MCF 10A (cell line): ENCODE measurements at regions of chr10 and their contacts with region 1.

Region 1: DNA sequence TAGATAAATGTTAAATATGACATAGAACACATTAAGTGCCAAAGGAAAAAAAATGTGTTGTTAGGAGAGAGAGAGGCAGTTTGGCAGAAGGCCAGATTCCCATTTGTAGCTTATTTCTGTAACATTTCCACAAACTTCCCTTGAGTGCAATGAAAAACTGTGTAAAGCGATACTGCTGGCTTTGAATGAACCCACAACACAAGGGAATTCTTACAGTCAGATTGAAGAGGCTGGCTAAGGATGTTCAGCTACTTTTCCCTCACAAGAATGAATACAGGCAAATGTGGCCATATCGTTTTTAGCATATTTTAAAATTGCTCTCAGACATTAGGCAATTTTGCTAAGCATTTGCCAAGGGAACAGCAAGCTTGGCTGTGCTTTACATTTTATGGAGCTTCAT is 614.1 kb upstream of the FZD8 start:
- DNase-seq: peak; percentile 27
- H3K4me3 Mint-ChIP-seq: peak overlapping the region; percentile 44
- H3K27ac Mint-ChIP-seq: peak overlapping the region; percentile 91
- H3K4me1 Mint-ChIP-seq: peaks cover 41% of the 10 kb centered on the region
- H3K27me3 Mint-ChIP-seq: no peaks in the 10 kb centered on the region
- CTCF ChIP-seq: no peak

Region 2: GRCh38 chr10:36271627-36272340 is 15.6 kb after region 1 on chr10:
- CTCF ChIA-PET with region 1: no interaction called
- POLR2A ChIA-PET with region 1: interaction called, 31 read pairs
- intact Hi-C with region 1: no loop called
- DNase-seq: peak; percentile 65
- H3K4me3 Mint-ChIP-seq: peak overlapping the region; percentile 32
- H3K27ac Mint-ChIP-seq: peak overlapping the region; percentile 98
- H3K4me1 Mint-ChIP-seq: peaks cover 26% of the 10 kb centered on the region
- H3K27me3 Mint-ChIP-seq: no peaks in the 10 kb centered on the region
- CTCF ChIP-seq: no peak

Region 3: DNA sequence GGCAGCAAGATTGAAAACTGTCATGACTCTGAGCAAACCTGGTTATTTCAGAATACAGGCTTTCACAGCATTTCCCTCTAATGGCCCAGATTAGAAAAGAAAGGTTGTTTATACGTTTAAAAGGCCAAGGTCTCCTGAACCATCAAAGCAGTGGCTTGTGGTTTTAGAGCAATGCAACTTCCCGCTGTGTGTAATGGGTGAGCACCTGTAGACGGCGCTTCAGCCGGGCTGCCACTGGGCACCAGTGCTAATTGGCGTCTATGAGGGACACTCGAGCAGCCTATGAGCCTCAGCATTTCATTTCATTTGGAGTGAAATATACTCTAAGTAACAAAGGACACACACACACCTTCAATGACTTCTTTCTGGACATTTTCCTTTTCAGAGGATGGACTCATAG is 57.0 kb after region 1 on chr10:
- CTCF ChIA-PET with region 1: no interaction called
- POLR2A ChIA-PET with region 1: no interaction called
- intact Hi-C with region 1: no loop called
- DNase-seq: no peak
- H3K4me3 Mint-ChIP-seq: no peak overlapping the region
- H3K27ac Mint-ChIP-seq: no peak overlapping the region
- H3K4me1 Mint-ChIP-seq: no peaks in the 10 kb centered on the region
- H3K27me3 Mint-ChIP-seq: no peaks in the 10 kb centered on the region
- CTCF ChIP-seq: no peak

Region 4: DNA sequence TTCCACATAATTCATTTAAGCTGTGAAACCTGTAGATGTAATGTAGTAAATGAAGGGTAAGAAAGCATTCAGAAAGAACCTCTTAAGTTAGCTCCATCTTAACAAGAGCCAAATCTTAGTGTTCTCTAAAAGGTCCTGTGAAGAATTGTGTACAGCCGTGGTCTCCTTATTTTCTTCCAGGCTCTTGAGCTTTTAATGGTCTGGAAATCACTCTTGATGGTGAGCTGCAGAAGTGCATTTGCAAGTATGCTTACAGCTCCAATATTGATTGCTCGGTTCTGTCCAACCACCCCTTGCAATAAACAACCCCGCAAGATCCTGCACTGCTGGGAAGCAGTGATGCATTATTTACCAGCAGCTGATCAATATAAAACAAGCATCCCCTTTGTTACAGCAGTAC is 76.8 kb after region 1 on chr10:
- CTCF ChIA-PET with region 1: no interaction called
- POLR2A ChIA-PET with region 1: no interaction called
- intact Hi-C with region 1: no loop called
- DNase-seq: no peak
- H3K4me3 Mint-ChIP-seq: no peak overlapping the region
- H3K27ac Mint-ChIP-seq: no peak overlapping the region
- H3K4me1 Mint-ChIP-seq: peaks cover 7% of the 10 kb centered on the region
- H3K27me3 Mint-ChIP-seq: no peaks in the 10 kb centered on the region
- CTCF ChIP-seq: no peak

Region 5: GRCh38 chr10:36423821-36424248 is 167.7 kb after region 1 on chr10:
- CTCF ChIA-PET with region 1: no interaction called
- POLR2A ChIA-PET with region 1: no interaction called
- intact Hi-C with region 1: no loop called
- DNase-seq: no peak
- H3K4me3 Mint-ChIP-seq: no peak overlapping the region
- H3K27ac Mint-ChIP-seq: no peak overlapping the region
- H3K4me1 Mint-ChIP-seq: no peaks in the 10 kb centered on the region
- H3K27me3 Mint-ChIP-seq: no peaks in the 10 kb centered on the region
- CTCF ChIP-seq: no peak

Region 6: GRCh38 chr10:36462194-36462593 is 206.0 kb after region 1 on chr10:
- CTCF ChIA-PET with region 1: no interaction called
- POLR2A ChIA-PET with region 1: interaction called, 10 read pairs
- intact Hi-C with region 1: no loop called
- DNase-seq: peak; percentile 92
- H3K4me3 Mint-ChIP-seq: no peak overlapping the region
- H3K27ac Mint-ChIP-seq: peak overlapping the region; percentile 74
- H3K4me1 Mint-ChIP-seq: peaks cover 49% of the 10 kb centered on the region
- H3K27me3 Mint-ChIP-seq: no peaks in the 10 kb centered on the region
- CTCF ChIP-seq: no peak

Region 7: GRCh38 chr10:36475746-36476145 is 219.6 kb after region 1 on chr10:
- CTCF ChIA-PET with region 1: no interaction called
- POLR2A ChIA-PET with region 1: no interaction called
- intact Hi-C with region 1: no loop called
- DNase-seq: no peak
- H3K4me3 Mint-ChIP-seq: no peak overlapping the region
- H3K27ac Mint-ChIP-seq: peak overlapping the region; percentile 19
- H3K4me1 Mint-ChIP-seq: no peaks in the 10 kb centered on the region
- H3K27me3 Mint-ChIP-seq: no peaks in the 10 kb centered on the region
- CTCF ChIP-seq: no peak